PC-3 (cell line): ENCODE measurements at regions of chr5 and their contacts with region 1.

Region 1: DNA sequence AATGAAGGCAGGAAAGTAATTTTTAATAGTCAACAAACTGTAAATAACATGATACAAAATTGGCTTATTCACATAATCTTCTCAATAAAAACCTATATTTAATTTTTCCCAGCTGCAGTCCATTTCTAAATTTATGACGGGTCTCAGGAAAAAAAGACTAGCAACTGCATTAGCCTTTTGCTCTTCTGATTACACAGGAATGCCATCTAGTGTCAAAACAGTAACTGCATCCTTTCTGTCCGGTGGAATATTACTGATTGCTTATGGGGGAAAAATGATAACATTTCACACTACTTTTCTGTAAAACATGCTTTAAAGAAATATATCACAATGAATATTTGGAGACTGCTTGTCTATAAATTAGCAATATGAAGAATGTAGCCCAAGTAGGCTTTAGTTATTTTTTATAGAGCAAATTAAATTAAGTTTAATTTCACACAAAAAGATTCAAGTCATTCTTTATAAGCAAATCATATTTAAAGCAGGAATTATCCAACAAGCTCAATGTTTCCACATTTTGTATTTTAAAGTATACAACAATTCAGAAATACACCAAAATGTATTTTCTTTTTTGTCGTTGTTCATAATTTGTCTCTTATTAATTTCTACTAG is 534.7 kb downstream of the CDH10 start:
- DNase-seq: peak; percentile 72
- ATAC-seq: peak; percentile 56; the same call in 1 of the 2 replicates
- H3K4me3 ChIP-seq: no peak overlapping the region
- H3K27ac ChIP-seq: no peak overlapping the region
- H3K4me1 ChIP-seq: no peaks in the 10 kb centered on the region
- H3K27me3 ChIP-seq: no peaks in the 10 kb centered on the region
- CTCF ChIP-seq: peak; percentile 94

Region 2: DNA sequence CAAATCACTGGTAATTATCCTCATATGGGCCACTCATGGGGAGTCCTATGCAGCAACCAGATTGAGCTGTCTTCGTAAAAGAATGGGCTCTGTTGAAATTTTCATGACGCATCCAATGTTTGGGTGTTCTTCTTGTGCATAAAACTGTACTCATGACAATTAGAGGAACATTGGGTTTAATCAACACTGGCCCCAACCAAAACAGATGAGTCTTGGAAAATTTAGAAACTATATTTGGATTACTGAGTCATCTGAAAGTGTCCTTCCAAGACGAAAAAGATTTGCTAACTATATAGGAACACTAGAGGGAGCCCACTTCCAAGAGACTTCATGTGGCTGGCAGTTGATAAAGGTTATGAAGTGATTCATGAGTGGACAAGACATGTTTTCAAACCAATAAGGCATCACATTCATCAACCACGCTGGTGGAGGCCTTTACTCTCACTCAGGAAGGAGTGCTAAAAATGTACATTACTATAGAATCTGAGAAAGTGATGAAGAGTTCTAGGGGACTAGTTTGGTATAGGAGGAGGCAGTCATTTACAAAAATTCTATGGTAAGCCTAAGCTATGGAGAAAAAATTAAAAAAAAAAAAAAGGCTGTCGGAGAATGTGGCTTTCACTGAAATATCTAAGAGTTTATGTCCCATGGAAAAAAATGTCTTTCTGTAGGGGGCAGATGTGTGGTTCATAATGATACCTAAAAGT is 289.2 kb before region 1 on chr5:
- CTCF ChIA-PET with region 1: no interaction called
- POLR2A ChIA-PET with region 1: no interaction called
- intact Hi-C with region 1: loop called (anchors 1 kb)
- DNase-seq: peak; percentile 84
- ATAC-seq: peak; percentile 85
- H3K4me3 ChIP-seq: no peak overlapping the region
- H3K27ac ChIP-seq: no peak overlapping the region
- H3K4me1 ChIP-seq: no peaks in the 10 kb centered on the region; the same call in 1 of the 2 replicates
- H3K27me3 ChIP-seq: no peaks in the 10 kb centered on the region
- CTCF ChIP-seq: peak; percentile 87

Region 3: GRCh38 chr5:24005384-24005783 is 104.7 kb before region 1 on chr5:
- CTCF ChIA-PET with region 1: interaction called, 12 read pairs
- POLR2A ChIA-PET with region 1: no interaction called
- intact Hi-C with region 1: loop called (anchors 1 kb)
- DNase-seq: peak; percentile 29
- ATAC-seq: 0 out of 2 replicates have a peak, but pooled peaks have one; percentile 50
- H3K4me3 ChIP-seq: no peak overlapping the region
- H3K27ac ChIP-seq: no peak overlapping the region
- H3K4me1 ChIP-seq: no peaks in the 10 kb centered on the region
- H3K27me3 ChIP-seq: no peaks in the 10 kb centered on the region
- CTCF ChIP-seq: peak; percentile 57